Posterior vena cava (tissue), 2 donors: ENCODE measurements at regions of chr2 and their contacts with region 1.

Region 1: GRCh38 chr2:52008097-52008496 is 976.2 kb upstream of the NRXN1 start:
- DNase-seq: no peak

Region 2: DNA sequence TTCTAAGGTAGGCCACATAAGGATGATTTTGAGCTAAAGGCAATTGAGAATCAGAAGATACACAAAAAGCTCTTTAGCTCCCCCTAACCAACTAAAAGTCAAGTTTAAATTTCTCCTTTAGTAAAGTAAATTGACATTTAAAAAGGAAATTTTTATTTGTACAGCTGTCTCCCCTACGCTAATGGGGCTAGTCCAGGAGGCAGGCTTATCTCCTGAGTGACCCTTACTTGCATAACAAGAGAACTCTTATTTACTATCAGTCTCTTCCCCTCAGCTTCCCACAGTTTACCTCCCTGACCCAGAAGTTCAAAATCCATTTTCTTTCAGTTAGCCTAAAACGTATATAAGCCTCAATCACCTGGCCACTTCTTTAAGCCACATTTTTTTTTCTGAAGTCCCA is 26.6 kb after region 1 on chr2:
- intact Hi-C with region 1: loop called in 1 of 2 experiments (anchors 2 kb)
- DNase-seq: no peak

Region 3: GRCh38 chr2:52097076-52097475 is 89.0 kb after region 1 on chr2:
- intact Hi-C with region 1: no loop called
- DNase-seq: no peak